Activated CD4-positive, alpha-beta T cell treated with anti-CD3 and anti-CD28 coated beads, Interleukin-2, amount 10 ng/mL, durations not matched to agents 24 days and 14 days (primary cell): ENCODE measurements at regions of chr11 and their contacts with region 1.

Region 1: GRCh38 chr11:313787-314547 is at the start of gene IFITM1:
- DNase-seq: peak; percentile 93
- H3K4me3 Mint-ChIP-seq: peak within 1 kb of the TSS; percentile 96
- H3K27ac Mint-ChIP-seq: peak within 1 kb of the TSS; percentile 98
- H3K4me1 Mint-ChIP-seq: peaks cover 36% of the 10 kb centered on the region
- H3K27me3 Mint-ChIP-seq: no peaks in the 10 kb centered on the region
- total RNA-seq, gene IFITM1: 241 and 256 TPM in 2 replicates

Region 2: GRCh38 chr11:326842-327580 is 13.0 kb after region 1 on chr11:
- intact Hi-C with region 1: loop called (anchors 2 kb)
- DNase-seq: peak; percentile 87
- H3K4me3 Mint-ChIP-seq: peak overlapping the region; percentile 79
- H3K27ac Mint-ChIP-seq: peak overlapping the region; percentile 96
- H3K4me1 Mint-ChIP-seq: peaks cover 57% of the 10 kb centered on the region
- H3K27me3 Mint-ChIP-seq: no peaks in the 10 kb centered on the region

Region 3: DNA sequence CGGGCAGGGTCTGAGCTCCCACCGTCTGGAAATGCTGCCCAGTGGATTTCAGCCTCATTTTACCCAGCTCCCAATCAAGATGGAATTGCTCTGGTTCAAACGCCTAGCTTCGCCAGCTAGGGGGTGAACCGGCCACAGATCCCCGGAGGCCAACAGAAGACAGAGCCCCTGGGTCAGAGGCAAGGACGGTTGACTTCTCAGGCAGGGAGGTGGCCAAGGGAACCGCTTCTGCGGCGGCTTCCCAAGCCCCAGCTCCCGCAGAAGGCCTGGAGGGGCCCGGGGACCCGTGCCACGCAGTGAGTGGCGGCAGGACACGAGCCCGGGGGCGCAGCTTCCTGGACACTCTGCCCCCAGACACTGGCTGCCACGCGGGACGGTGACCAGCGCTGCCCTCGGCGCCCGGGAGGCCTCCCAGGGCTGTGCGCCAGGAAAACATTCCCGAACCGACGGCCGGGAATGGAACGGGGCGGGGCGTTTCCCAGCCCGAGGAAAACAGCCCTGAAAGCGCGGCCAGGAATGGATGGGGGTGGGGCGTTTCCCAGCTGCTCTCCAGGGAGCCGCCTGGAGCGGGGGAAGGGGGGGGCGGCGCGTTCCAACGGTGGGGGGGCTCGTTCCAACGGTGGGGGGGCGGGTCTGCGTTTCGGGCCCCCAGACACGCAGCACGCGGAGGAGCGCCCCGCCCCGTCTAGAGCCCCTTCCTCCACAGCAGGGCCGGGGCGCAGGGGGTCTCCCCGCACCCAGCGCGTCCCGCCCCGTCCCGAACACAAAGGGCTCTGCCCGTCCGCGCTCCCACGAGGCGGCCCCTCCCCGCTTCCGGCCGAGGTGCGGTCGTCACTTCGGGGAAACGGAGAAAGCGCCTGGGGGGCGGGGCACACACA is 41.9 kb after region 1 on chr11:
- intact Hi-C with region 1: loop called (anchors 1 kb)
- DNase-seq: peak; percentile 97
- H3K4me3 Mint-ChIP-seq: peak overlapping the region; percentile 89
- H3K27ac Mint-ChIP-seq: peak overlapping the region; percentile 95
- H3K4me1 Mint-ChIP-seq: peaks cover 26% of the 10 kb centered on the region
- H3K27me3 Mint-ChIP-seq: peaks cover 5% of the 10 kb centered on the region